ENCODE measurements at regions of chr22 and their contacts with region 1.

Region 1: GRCh38 chr22:36352803-36353507 is 34.8 kb downstream of the MYH9 start:
- DNase-seq: no peak
- H3K4me3 ChIP-seq: no peak overlapping the region
- H3K27ac ChIP-seq: peak overlapping the region; percentile 62
- H3K4me1 ChIP-seq: peaks cover 18% of the 10 kb centered on the region
- H3K27me3 ChIP-seq: no peaks in the 10 kb centered on the region
- CTCF ChIP-seq: no peak

Region 2: GRCh38 chr22:36252754-36253517 is 100.0 kb before region 1 on chr22 and contains the start of gene APOL1:
- CTCF ChIA-PET with region 1: no interaction called
- POLR2A ChIA-PET with region 1: no interaction called
- intact Hi-C with region 1: no loop called
- DNase-seq: no peak
- H3K4me3 ChIP-seq: no peak within 1 kb of the TSS
- H3K27ac ChIP-seq: no peak within 1 kb of the TSS
- H3K4me1 ChIP-seq: no peaks in the 10 kb centered on the region
- H3K27me3 ChIP-seq: no peaks in the 10 kb centered on the region
- CTCF ChIP-seq: no peak
- total RNA-seq, gene APOL1: 0.30 and 0.87 TPM in 2 replicates

Region 3: DNA sequence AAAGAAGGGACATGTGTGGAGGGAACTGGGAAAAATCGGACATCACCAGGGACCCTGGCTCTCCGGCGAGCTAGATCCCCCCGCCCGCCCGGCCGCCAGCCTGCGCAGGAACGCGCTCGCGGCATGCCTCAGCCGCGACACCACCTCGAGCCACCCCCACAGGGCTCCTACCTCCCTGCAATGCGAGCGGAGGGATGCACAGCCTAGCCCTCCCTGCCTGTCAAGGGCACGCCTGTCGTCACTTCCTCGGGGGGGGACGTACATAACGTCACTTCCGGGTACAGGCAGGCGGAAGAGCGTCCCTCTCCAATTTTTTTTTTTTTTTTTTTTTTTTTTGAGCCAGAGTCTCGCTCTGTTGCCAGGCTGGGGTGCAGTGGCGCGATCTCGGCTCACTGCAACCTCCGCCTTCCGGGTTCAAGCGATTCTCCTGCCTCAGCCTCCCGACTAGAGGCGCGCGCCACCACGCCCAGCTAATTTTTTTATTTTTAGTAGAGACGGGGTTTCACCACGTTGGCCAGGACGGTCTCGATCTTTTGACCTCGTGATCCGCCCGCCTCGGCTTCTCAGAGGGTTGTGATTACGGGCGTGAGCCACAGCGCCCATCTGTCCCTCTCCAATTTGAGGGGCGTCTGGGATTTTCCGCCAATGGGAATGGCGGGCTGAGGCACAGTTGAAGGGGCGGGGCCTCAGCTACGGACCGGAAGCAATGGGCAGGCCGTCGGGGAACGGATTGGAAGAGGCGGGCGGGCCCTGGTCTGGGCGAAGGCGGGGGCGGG is 128.6 kb after region 1 on chr22 and contains the start of gene TXN2:
- CTCF ChIA-PET with region 1: no interaction called
- POLR2A ChIA-PET with region 1: interaction called, 14 read pairs
- intact Hi-C with region 1: no loop called
- DNase-seq: peak; percentile 98
- H3K4me3 ChIP-seq: peak within 1 kb of the TSS; percentile 58
- H3K27ac ChIP-seq: peak within 1 kb of the TSS; percentile 99
- H3K4me1 ChIP-seq: peaks cover 8% of the 10 kb centered on the region
- H3K27me3 ChIP-seq: no peaks in the 10 kb centered on the region
- CTCF ChIP-seq: no peak
- total RNA-seq, gene TXN2: 85.4 and 88.4 TPM in 2 replicates